Gastrocnemius medialis (tissue), 4 donors: ENCODE measurements at regions of chr12 and their contacts with region 1.

Region 1: DNA sequence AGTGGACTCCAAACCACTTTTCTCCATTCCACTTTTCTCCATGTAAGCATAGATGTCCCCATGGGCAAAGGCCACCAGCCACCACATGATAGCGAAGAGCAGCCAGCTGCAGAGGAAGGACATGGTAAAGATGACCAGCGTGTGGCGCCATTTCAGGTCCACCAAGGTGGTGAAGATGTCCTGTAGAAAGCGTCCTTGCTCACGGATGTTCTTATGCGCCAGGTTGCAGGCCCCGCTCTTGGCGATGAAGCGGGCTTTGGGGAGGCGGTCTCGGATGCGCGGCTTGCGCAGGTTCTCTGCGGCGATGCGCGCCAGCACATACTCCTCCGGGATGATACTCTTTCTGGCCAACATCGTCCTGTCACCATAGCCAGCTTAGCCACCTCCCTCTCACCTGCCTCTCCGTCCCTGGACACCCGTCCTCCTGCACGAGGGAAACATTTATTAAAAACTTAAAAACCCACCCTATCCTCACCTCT is 1.2 kb downstream of the KCNJ8 start:
- DNase-seq: peak; percentile 26 to 59
- ATAC-seq: peak; percentile 67 to 77
- H3K4me3 ChIP-seq: peak overlapping the region; percentile 59 to 66 (median 62)
- H3K27ac ChIP-seq: peak overlapping the region; percentile 57 to 73 (median 71)
- H3K4me1 ChIP-seq: no peaks in the 10 kb centered on the region
- H3K27me3 ChIP-seq: peaks cover 0 to 5% (median 5%) of the 10 kb centered on the region in 3 donors
- CTCF ChIP-seq: peak in 2 of 5 experiments; percentile 22 to 36
- POLR2A ChIP-seq: no peak

Region 2: GRCh38 chr12:21962236-21962635 is 188.9 kb after region 1 on chr12:
- in situ Hi-C with region 1: no loop called
- intact Hi-C with region 1: no loop called
- DNase-seq: no peak
- ATAC-seq: no peak
- H3K4me3 ChIP-seq: no peak overlapping the region
- H3K27ac ChIP-seq: no peak overlapping the region
- H3K4me1 ChIP-seq: no peaks in the 10 kb centered on the region
- H3K27me3 ChIP-seq: no peaks in the 10 kb centered on the region
- CTCF ChIP-seq: no peak
- POLR2A ChIP-seq: no peak

Region 3: GRCh38 chr12:21989819-21990412 is 216.6 kb after region 1 on chr12:
- in situ Hi-C with region 1: no loop called
- intact Hi-C with region 1: loop called (anchors 5 kb)
- DNase-seq: no peak
- ATAC-seq: no peak
- H3K4me3 ChIP-seq: no peak overlapping the region
- H3K27ac ChIP-seq: no peak overlapping the region
- H3K4me1 ChIP-seq: no peaks in the 10 kb centered on the region
- H3K27me3 ChIP-seq: no peaks in the 10 kb centered on the region
- CTCF ChIP-seq: peak; percentile 19 to 57 (median 52)
- POLR2A ChIP-seq: no peak